GM12878 (cell line): ENCODE measurements at regions of chr4 and their contacts with region 1.

Region 1: DNA sequence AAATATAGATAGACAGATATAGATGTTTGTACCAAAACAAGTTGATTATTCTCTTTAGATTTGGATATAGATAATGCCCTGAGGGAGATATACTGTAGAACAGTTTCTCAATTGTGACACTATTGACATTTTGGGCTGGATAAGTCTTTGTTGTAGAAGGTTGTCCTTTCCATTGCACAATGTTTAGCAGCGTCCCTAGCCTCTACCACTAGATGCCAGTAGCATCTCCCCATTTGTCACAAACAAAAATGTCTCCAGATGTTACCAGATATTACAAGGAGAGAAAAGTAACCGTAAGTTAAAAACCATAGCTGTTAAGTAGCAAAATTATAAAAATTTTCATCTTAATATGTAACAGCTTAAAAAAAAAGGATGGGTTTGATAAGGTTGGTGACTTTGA is 2595.3 kb downstream of the ARAP2 start:
- DNase-seq: no peak
- ATAC-seq: peak; percentile 46
- H3K4me3 ChIP-seq: no peak overlapping the region
- H3K27ac ChIP-seq: no peak overlapping the region
- H3K4me1 ChIP-seq: no peaks in the 10 kb centered on the region
- H3K27me3 ChIP-seq: no peaks in the 10 kb centered on the region
- CTCF ChIP-seq: peak in 2 of 3 experiments; percentile 18 to 34; a peak in 2 of 6 replicates
- EP300 ChIP-seq: no peak
- POLR2A ChIP-seq: no peak
- RAD21 ChIP-seq: no peak

Region 2: GRCh38 chr4:33616121-33616520 is 32.9 kb before region 1 on chr4:
- CTCF ChIA-PET with region 1: no interaction called
- POLR2A ChIA-PET with region 1: no interaction called
- RAD21 ChIA-PET with region 1: interaction called, 3 read pairs
- SMC1A ChIA-PET with region 1: interaction called, 5 read pairs
- in situ Hi-C with region 1: no loop called
- intact Hi-C with region 1: loop called (anchors 1 kb)
- DNase-seq: no peak
- ATAC-seq: no peak
- H3K4me3 ChIP-seq: no peak overlapping the region
- H3K27ac ChIP-seq: no peak overlapping the region
- H3K4me1 ChIP-seq: no peaks in the 10 kb centered on the region
- H3K27me3 ChIP-seq: no peaks in the 10 kb centered on the region
- CTCF ChIP-seq: no peak
- EP300 ChIP-seq: no peak
- POLR2A ChIP-seq: no peak
- RAD21 ChIP-seq: no peak

Region 3: GRCh38 chr4:33722800-33723516 is 73.9 kb after region 1 on chr4:
- CTCF ChIA-PET with region 1: interaction called, 12 read pairs
- POLR2A ChIA-PET with region 1: no interaction called
- RAD21 ChIA-PET with region 1: interaction called, 11 read pairs
- SMC1A ChIA-PET with region 1: interaction called, 8 read pairs
- in situ Hi-C with region 1: no loop called
- intact Hi-C with region 1: no loop called
- DNase-seq: no peak
- ATAC-seq: no peak
- H3K4me3 ChIP-seq: no peak overlapping the region
- H3K27ac ChIP-seq: no peak overlapping the region
- H3K4me1 ChIP-seq: no peaks in the 10 kb centered on the region
- H3K27me3 ChIP-seq: no peaks in the 10 kb centered on the region
- CTCF ChIP-seq: peak in 1 of 3 experiments; percentile 25; a peak in 2 of 6 replicates
- EP300 ChIP-seq: no peak
- POLR2A ChIP-seq: no peak
- RAD21 ChIP-seq: no peak